HepG2 (cell line): ENCODE measurements at regions of chr1 and their contacts with region 1.

Region 1: DNA sequence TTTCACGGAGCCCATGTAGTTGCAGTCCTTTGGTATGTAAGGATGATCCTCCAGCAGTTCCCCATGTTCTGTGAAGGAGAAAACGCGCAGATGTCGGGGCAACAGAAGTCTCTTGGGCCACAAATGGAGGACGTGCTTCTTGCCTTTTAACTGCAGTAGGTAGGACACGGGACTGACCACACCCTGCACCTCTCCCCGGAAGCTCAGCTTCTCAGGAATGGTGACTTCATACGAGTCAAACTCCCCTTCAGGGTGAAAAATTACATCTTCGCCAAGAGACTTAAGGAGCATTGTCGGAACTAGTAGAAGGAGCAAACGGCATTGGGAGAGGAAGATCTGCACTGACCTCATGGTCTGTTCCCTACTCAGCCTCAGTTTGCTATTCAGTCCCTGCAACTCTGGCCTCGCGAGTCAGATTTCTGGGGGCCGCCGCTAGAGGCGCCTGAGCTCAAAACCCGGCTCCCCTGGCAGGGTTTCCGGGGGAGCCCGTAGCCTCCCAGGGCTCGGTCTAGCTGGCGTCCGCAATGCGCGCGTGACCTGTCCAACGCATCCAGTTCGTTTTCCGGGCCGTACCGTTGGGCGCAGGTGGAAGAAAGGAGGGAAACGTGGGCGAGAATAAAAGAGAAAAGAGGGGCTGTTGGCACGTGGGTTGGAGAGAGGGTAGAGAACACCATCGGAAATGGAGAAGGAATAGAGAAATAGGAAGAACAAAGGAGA is at the start of gene ADAM30:
- DNase-seq: no peak
- ATAC-seq: no peak
- H3K4me3 ChIP-seq: no peak within 1 kb of the TSS
- H3K27ac ChIP-seq: no peak within 1 kb of the TSS
- H3K4me1 ChIP-seq: peaks cover 42% of the 10 kb centered on the region
- H3K27me3 ChIP-seq: peaks cover 0 to 3% of the 10 kb centered on the region in 2 experiments; a peak in 1 of 5 replicates
- CTCF ChIP-seq: no peak
- EP300 ChIP-seq: no peak
- POLR2A ChIP-seq: no peak
- RAD21 ChIP-seq: no peak
- total RNA-seq, gene ADAM30: not detected in 2 replicates

Region 2: DNA sequence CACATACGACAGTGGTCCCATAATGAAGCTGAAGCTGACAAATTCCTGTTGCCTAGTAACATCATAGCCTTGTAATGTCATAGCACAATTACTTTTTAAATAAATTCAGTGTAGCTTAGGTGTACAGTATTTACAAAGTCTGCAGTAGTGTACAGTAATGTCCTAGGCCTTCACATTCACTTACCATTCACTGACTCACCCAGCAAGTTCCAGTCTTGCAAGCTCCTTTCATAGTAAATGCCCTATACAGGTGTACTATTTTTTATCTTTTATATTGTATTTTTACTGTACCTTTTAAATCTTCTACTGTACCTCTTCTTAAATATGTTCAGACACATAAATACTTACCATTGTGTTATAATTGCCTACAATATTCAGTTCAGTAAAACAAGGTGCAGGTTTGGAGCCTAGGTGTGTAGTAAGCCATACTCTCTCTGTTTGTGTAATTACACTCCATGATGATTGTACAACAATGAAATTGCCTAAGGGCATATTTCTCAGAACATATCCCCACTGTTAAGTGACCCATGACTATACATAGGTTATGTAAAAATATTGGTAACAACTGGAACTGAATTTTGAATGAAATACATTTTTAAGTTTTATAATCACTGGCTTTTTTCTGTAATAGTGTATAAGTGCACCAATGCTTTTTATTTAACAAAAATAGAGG is 33.6 kb after region 1 on chr1:
- CTCF ChIA-PET with region 1: no interaction called
- POLR2A ChIA-PET with region 1: no interaction called
- in situ Hi-C with region 1: loop called (anchors 5 kb)
- intact Hi-C with region 1: no loop called
- DNase-seq: no peak
- ATAC-seq: no peak
- H3K4me3 ChIP-seq: no peak overlapping the region
- H3K27ac ChIP-seq: no peak overlapping the region
- H3K4me1 ChIP-seq: no peaks in the 10 kb centered on the region
- H3K27me3 ChIP-seq: no peaks in the 10 kb centered on the region
- CTCF ChIP-seq: no peak
- EP300 ChIP-seq: no peak
- POLR2A ChIP-seq: no peak
- RAD21 ChIP-seq: no peak